ENCODE measurements at regions of chr5 and their contacts with region 1.

Region 1: GRCh38 chr5:35651002-35651756 is 33.5 kb downstream of the SPEF2 start:
- DNase-seq: peak; percentile 64 to 69 (median 68)
- H3K4me3 ChIP-seq: no peak overlapping the region
- H3K4me3 Mint-ChIP-seq: no peak overlapping the region
- H3K27ac ChIP-seq: no peak overlapping the region
- H3K27ac Mint-ChIP-seq: peak overlapping the region in 6 of 7 donors; percentile 16 to 74 (median 56)
- H3K4me1 ChIP-seq: peaks cover 4% of the 10 kb centered on the region
- H3K4me1 Mint-ChIP-seq: peaks cover 5 to 18% (median 14%) of the 10 kb centered on the region in 4 donors
- H3K27me3 ChIP-seq: no peaks in the 10 kb centered on the region
- H3K27me3 Mint-ChIP-seq: no peaks in the 10 kb centered on the region

Region 2: GRCh38 chr5:35617435-35618303 is 33.5 kb before region 1 on chr5 and contains the start of gene SPEF2:
- CTCF ChIA-PET with region 1: interaction called, 45 read pairs
- POLR2A ChIA-PET with region 1: interaction called, 6 read pairs
- intact Hi-C with region 1: loop called (anchors 2 kb)
- DNase-seq: peak; percentile 78 to 84 (median 81)
- H3K4me3 ChIP-seq: peak within 1 kb of the TSS; percentile 73 to 83
- H3K4me3 Mint-ChIP-seq: peak within 1 kb of the TSS; percentile 92 to 98 (median 95)
- H3K27ac ChIP-seq: peak within 1 kb of the TSS; percentile 57
- H3K27ac Mint-ChIP-seq: peak within 1 kb of the TSS; percentile 81 to 99 (median 96)
- H3K4me1 ChIP-seq: peaks cover 23% of the 10 kb centered on the region
- H3K4me1 Mint-ChIP-seq: peaks cover 19 to 41% (median 27%) of the 10 kb centered on the region in 4 donors
- H3K27me3 ChIP-seq: no peaks in the 10 kb centered on the region
- H3K27me3 Mint-ChIP-seq: no peaks in the 10 kb centered on the region
- total RNA-seq, gene SPEF2: 14.2 to 15.4 TPM

Region 3: GRCh38 chr5:35665096-35665495 is 13.9 kb after region 1 on chr5:
- CTCF ChIA-PET with region 1: interaction called, 47 read pairs
- POLR2A ChIA-PET with region 1: no interaction called
- intact Hi-C with region 1: no loop called
- DNase-seq: no peak
- H3K4me3 ChIP-seq: no peak overlapping the region
- H3K4me3 Mint-ChIP-seq: peak overlapping the region in 2 of 8 donors; percentile 11 to 47
- H3K27ac ChIP-seq: no peak overlapping the region
- H3K27ac Mint-ChIP-seq: peak overlapping the region in 3 of 7 donors; percentile 1 to 59 (median 19)
- H3K4me1 ChIP-seq: peaks cover 29% of the 10 kb centered on the region
- H3K4me1 Mint-ChIP-seq: peaks cover 27 to 51% (median 40%) of the 10 kb centered on the region in 4 donors
- H3K27me3 ChIP-seq: no peaks in the 10 kb centered on the region
- H3K27me3 Mint-ChIP-seq: no peaks in the 10 kb centered on the region

Region 4: GRCh38 chr5:35683466-35683865 is 32.3 kb after region 1 on chr5:
- CTCF ChIA-PET with region 1: interaction called, 10 read pairs
- POLR2A ChIA-PET with region 1: no interaction called
- intact Hi-C with region 1: no loop called
- DNase-seq: no peak
- H3K4me3 ChIP-seq: no peak overlapping the region
- H3K4me3 Mint-ChIP-seq: no peak overlapping the region
- H3K27ac ChIP-seq: no peak overlapping the region
- H3K27ac Mint-ChIP-seq: no peak overlapping the region
- H3K4me1 ChIP-seq: peaks cover 13% of the 10 kb centered on the region
- H3K4me1 Mint-ChIP-seq: peaks cover 8 to 14% (median 10%) of the 10 kb centered on the region in 4 donors
- H3K27me3 ChIP-seq: no peaks in the 10 kb centered on the region
- H3K27me3 Mint-ChIP-seq: no peaks in the 10 kb centered on the region

Region 5: GRCh38 chr5:35822511-35822910 is 171.3 kb after region 1 on chr5:
- CTCF ChIA-PET with region 1: interaction called, 14 read pairs
- POLR2A ChIA-PET with region 1: interaction called, 6 read pairs
- intact Hi-C with region 1: no loop called
- DNase-seq: peak; percentile 59 to 70 (median 66)
- H3K4me3 ChIP-seq: peak overlapping the region in 1 of 2 donors; percentile 11
- H3K4me3 Mint-ChIP-seq: peak overlapping the region; percentile 27 to 95 (median 72)
- H3K27ac ChIP-seq: peak overlapping the region; percentile 46
- H3K27ac Mint-ChIP-seq: peak overlapping the region; percentile 74 to 98 (median 92)
- H3K4me1 ChIP-seq: peaks cover 99% of the 10 kb centered on the region
- H3K4me1 Mint-ChIP-seq: peaks cover 77 to 91% (median 84%) of the 10 kb centered on the region in 4 donors
- H3K27me3 ChIP-seq: no peaks in the 10 kb centered on the region
- H3K27me3 Mint-ChIP-seq: no peaks in the 10 kb centered on the region

Region 6: GRCh38 chr5:35857606-35858205 is 206.5 kb after region 1 on chr5:
- CTCF ChIA-PET with region 1: interaction called, 22 read pairs
- POLR2A ChIA-PET with region 1: interaction called, 12 read pairs
- intact Hi-C with region 1: loop called (anchors 1 kb)
- DNase-seq: peak in 3 of 5 donors; percentile 41 to 45 (median 44)
- H3K4me3 ChIP-seq: peak overlapping the region; percentile 82 to 85
- H3K4me3 Mint-ChIP-seq: peak overlapping the region; percentile 88 to 99 (median 96)
- H3K27ac ChIP-seq: peak overlapping the region; percentile 97
- H3K27ac Mint-ChIP-seq: peak overlapping the region; percentile 94 to 100 (median 100)
- H3K4me1 ChIP-seq: peaks cover 55% of the 10 kb centered on the region
- H3K4me1 Mint-ChIP-seq: peaks cover 42 to 73% (median 51%) of the 10 kb centered on the region in 4 donors
- H3K27me3 ChIP-seq: no peaks in the 10 kb centered on the region
- H3K27me3 Mint-ChIP-seq: no peaks in the 10 kb centered on the region

Region 7: GRCh38 chr5:35920890-35921289 is 269.7 kb after region 1 on chr5:
- CTCF ChIA-PET with region 1: interaction called, 544 read pairs
- POLR2A ChIA-PET with region 1: interaction called, 48 read pairs
- intact Hi-C with region 1: loop called (anchors 1 kb)
- DNase-seq: no peak
- H3K4me3 ChIP-seq: no peak overlapping the region
- H3K4me3 Mint-ChIP-seq: no peak overlapping the region
- H3K27ac ChIP-seq: no peak overlapping the region
- H3K27ac Mint-ChIP-seq: no peak overlapping the region
- H3K4me1 ChIP-seq: peaks cover 15% of the 10 kb centered on the region
- H3K4me1 Mint-ChIP-seq: peaks cover 22 to 36% (median 30%) of the 10 kb centered on the region in 4 donors
- H3K27me3 ChIP-seq: no peaks in the 10 kb centered on the region
- H3K27me3 Mint-ChIP-seq: peaks cover 0 to 2% of the 10 kb centered on the region in 2 donors

Measured in CD4-positive, alpha-beta memory T cell (primary cell).